CD4-positive, alpha-beta memory T cell (primary cell): ENCODE measurements at regions of chr14 and their contacts with region 1.

Region 1: GRCh38 chr14:100155042-100155846 is 4.2 kb downstream of the DEGS2 start:
- DNase-seq: no peak
- H3K4me3 ChIP-seq: no peak overlapping the region
- H3K4me3 Mint-ChIP-seq: peak overlapping the region in 2 of 8 donors; percentile 15 to 38
- H3K27ac ChIP-seq: no peak overlapping the region
- H3K27ac Mint-ChIP-seq: peak overlapping the region in 1 of 7 donors; percentile 68
- H3K4me1 ChIP-seq: peaks cover 9% of the 10 kb centered on the region
- H3K4me1 Mint-ChIP-seq: peaks cover 0 to 10% (median 1%) of the 10 kb centered on the region in 4 donors
- H3K27me3 ChIP-seq: no peaks in the 10 kb centered on the region
- H3K27me3 Mint-ChIP-seq: peaks cover 11 to 12% of the 10 kb centered on the region in 2 donors

Region 2: DNA sequence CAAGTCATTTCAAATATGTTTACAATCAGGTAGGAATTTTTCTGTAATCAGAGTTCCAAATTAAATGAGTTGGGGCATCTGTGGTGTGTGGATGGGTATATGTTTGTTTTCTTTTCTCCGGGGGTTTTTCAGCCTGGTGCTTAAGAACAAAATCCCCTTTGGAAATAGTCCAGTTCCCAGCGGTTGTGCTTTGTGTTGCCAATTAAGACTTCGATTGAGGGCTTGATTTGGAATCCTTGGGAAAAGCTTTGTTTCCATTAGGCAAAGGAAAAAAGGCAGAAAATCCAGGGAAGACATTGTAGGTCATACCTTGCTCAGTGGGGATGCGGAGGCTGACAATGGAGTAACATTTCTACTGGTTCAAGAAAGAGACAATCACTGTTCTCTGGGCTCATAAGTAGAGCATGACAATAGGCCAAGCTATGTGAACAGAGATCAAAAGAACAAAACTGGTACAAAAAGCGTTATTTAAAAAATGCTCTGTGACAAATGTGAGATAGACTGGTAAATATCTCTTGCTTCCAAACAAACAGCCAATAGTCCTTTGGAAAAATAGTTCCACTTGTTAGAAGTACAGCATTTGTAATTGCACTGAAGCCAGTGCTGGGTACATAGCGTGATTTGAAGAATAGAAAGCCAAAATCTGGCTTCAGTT is 282.3 kb before region 1 on chr14:
- CTCF ChIA-PET with region 1: no interaction called
- POLR2A ChIA-PET with region 1: no interaction called
- intact Hi-C with region 1: no loop called
- DNase-seq: no peak
- H3K4me3 ChIP-seq: no peak overlapping the region
- H3K4me3 Mint-ChIP-seq: no peak overlapping the region
- H3K27ac ChIP-seq: no peak overlapping the region
- H3K27ac Mint-ChIP-seq: no peak overlapping the region
- H3K4me1 ChIP-seq: no peaks in the 10 kb centered on the region
- H3K4me1 Mint-ChIP-seq: no peaks in the 10 kb centered on the region
- H3K27me3 ChIP-seq: no peaks in the 10 kb centered on the region
- H3K27me3 Mint-ChIP-seq: peaks cover 24 to 43% of the 10 kb centered on the region in 2 donors

Region 3: DNA sequence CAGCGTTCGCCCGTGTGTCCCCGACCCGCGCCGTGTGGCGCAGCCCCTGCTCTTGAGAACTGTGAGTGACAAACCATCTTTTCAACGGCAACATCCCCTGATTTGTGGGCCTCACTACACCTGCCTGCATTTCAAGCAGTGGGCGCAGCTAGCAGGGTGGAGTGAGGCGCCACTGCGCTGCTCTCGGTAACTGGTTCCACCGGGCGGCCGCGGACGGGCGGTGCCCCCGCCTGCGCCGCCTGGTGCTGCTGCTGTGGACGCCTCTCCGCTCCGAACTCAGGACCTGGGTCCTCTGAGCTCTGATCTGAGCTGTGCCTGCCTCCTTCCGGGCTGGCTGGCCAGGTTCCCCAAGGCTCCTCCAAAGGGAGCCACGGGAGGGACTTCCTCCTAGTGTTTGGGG is 10.1 kb after region 1 on chr14:
- CTCF ChIA-PET with region 1: interaction called, 10 read pairs
- POLR2A ChIA-PET with region 1: interaction called, 3 read pairs
- intact Hi-C with region 1: no loop called
- DNase-seq: no peak
- H3K4me3 ChIP-seq: no peak overlapping the region
- H3K4me3 Mint-ChIP-seq: peak overlapping the region in 6 of 8 donors; percentile 36 to 75 (median 54)
- H3K27ac ChIP-seq: no peak overlapping the region
- H3K27ac Mint-ChIP-seq: peak overlapping the region in 1 of 7 donors; percentile 47
- H3K4me1 ChIP-seq: peaks cover 9% of the 10 kb centered on the region
- H3K4me1 Mint-ChIP-seq: peaks cover 7 to 15% (median 8%) of the 10 kb centered on the region in 4 donors
- H3K27me3 ChIP-seq: no peaks in the 10 kb centered on the region
- H3K27me3 Mint-ChIP-seq: peaks cover 3 to 4% of the 10 kb centered on the region in 2 donors